Calu3 (cell line): ENCODE measurements at regions of chr7 and their contacts with region 1.

Region 1: GRCh38 chr7:32164346-32164957 is 94.2 kb upstream of the PDE1C start:
- DNase-seq: peak; percentile 79
- H3K4me3 Mint-ChIP-seq: no peak overlapping the region
- H3K27ac Mint-ChIP-seq: peak overlapping the region; percentile 62
- H3K4me1 Mint-ChIP-seq: peaks cover 36% of the 10 kb centered on the region
- H3K27me3 Mint-ChIP-seq: no peaks in the 10 kb centered on the region
- CTCF ChIP-seq: peak; percentile 92

Region 2: DNA sequence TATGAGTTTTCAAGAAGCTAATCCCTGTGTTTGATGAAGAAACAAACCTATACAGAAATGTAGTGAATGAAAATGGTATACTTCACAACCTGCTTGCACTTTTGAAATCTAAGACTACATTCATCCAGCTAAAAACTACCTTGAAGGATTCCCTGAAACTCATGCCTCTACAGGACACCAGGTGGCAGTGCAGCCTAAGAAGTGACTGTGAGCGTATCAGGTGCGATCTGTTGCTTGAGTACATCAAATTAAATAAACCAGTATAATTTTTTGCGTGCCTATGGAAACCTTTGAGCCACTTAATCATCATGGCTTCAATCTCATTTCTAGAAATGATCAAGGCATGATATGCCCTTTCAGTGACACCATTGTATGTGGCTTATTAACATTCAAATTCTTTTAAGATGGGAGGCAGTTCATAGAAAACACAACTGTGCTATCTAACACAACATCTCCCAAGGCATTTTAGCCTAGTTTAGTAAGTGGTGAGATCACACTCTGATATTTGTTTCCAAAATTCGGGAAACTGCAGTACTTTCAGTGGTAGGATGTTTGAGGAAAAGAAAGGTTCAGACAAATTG is 420.1 kb before region 1 on chr7:
- CTCF ChIA-PET with region 1: interaction called, 23 read pairs
- intact Hi-C with region 1: loop called (anchors 1 kb)
- DNase-seq: peak; percentile 82
- H3K4me3 Mint-ChIP-seq: no peak overlapping the region
- H3K27ac Mint-ChIP-seq: no peak overlapping the region
- H3K4me1 Mint-ChIP-seq: peaks cover 21% of the 10 kb centered on the region
- H3K27me3 Mint-ChIP-seq: no peaks in the 10 kb centered on the region
- CTCF ChIP-seq: peak; percentile 93

Region 3: GRCh38 chr7:31811650-31812461 is 352.6 kb before region 1 on chr7:
- CTCF ChIA-PET with region 1: interaction called, 20 read pairs
- intact Hi-C with region 1: loop called (anchors 1 kb)
- DNase-seq: no peak
- H3K4me3 Mint-ChIP-seq: no peak overlapping the region
- H3K27ac Mint-ChIP-seq: no peak overlapping the region
- H3K4me1 Mint-ChIP-seq: peaks cover 25% of the 10 kb centered on the region
- H3K27me3 Mint-ChIP-seq: no peaks in the 10 kb centered on the region
- CTCF ChIP-seq: no peak

Region 4: DNA sequence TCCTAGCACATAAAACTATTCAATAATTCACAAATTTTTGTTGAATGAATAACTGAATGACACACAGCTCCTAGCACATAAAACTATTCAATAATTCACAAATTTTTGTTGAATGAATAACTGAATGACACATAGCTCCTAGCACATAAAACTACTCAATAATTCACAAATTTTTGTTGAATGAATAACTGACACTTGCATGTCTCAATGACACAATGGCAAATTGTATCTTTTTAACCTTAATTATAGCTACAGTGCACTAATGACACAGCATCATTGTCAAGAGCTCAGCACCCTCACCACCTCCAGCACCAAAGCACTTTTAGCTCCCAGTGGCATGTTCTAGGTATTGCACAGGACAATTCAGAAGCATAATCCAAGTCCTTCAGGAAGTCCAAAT is 225.8 kb before region 1 on chr7:
- CTCF ChIA-PET with region 1: interaction called, 11 read pairs
- intact Hi-C with region 1: loop called (anchors 5 kb)
- DNase-seq: peak; percentile 80
- H3K4me3 Mint-ChIP-seq: no peak overlapping the region
- H3K27ac Mint-ChIP-seq: peak overlapping the region; percentile 80
- H3K4me1 Mint-ChIP-seq: peaks cover 84% of the 10 kb centered on the region
- H3K27me3 Mint-ChIP-seq: no peaks in the 10 kb centered on the region
- CTCF ChIP-seq: peak; percentile 78

Region 5: GRCh38 chr7:32070406-32071360 is 93.8 kb before region 1 on chr7 and contains the start of gene PDE1C:
- CTCF ChIA-PET with region 1: interaction called, 10 read pairs
- intact Hi-C with region 1: loop called (anchors 1 kb)
- DNase-seq: peak; percentile 65
- H3K4me3 Mint-ChIP-seq: peak within 1 kb of the TSS; percentile 95
- H3K27ac Mint-ChIP-seq: peak within 1 kb of the TSS; percentile 48
- H3K4me1 Mint-ChIP-seq: peaks cover 64% of the 10 kb centered on the region
- H3K27me3 Mint-ChIP-seq: no peaks in the 10 kb centered on the region
- CTCF ChIP-seq: no peak
- total RNA-seq, gene PDE1C: 25.1 and 34.0 TPM in 2 replicates